IMR-90 (cell line): ENCODE measurements at regions of chr7 and their contacts with region 1.

Region 1: GRCh38 chr7:14717816-14718215 is 184.7 kb downstream of the DGKB start:
- DNase-seq: peak; percentile 13
- ATAC-seq: peak; percentile 68
- H3K4me3 ChIP-seq: no peak overlapping the region
- H3K27ac ChIP-seq: no peak overlapping the region
- H3K4me1 ChIP-seq: no peaks in the 10 kb centered on the region
- H3K27me3 ChIP-seq: no peaks in the 10 kb centered on the region
- CTCF ChIP-seq: peak; percentile 58
- POLR2A ChIP-seq: no peak
- RAD21 ChIP-seq: peak; percentile 58

Region 2: GRCh38 chr7:14698239-14698638 is 19.6 kb before region 1 on chr7:
- CTCF ChIA-PET with region 1: interaction called, 3 read pairs
- POLR2A ChIA-PET with region 1: no interaction called
- dilution Hi-C with region 1: no loop called
- in situ Hi-C with region 1: no loop called
- intact Hi-C with region 1: loop called (anchors 1 kb)
- DNase-seq: no peak
- ATAC-seq: no peak
- H3K4me3 ChIP-seq: no peak overlapping the region
- H3K27ac ChIP-seq: no peak overlapping the region
- H3K4me1 ChIP-seq: no peaks in the 10 kb centered on the region
- H3K27me3 ChIP-seq: no peaks in the 10 kb centered on the region
- CTCF ChIP-seq: no peak
- POLR2A ChIP-seq: no peak
- RAD21 ChIP-seq: no peak

Region 3: DNA sequence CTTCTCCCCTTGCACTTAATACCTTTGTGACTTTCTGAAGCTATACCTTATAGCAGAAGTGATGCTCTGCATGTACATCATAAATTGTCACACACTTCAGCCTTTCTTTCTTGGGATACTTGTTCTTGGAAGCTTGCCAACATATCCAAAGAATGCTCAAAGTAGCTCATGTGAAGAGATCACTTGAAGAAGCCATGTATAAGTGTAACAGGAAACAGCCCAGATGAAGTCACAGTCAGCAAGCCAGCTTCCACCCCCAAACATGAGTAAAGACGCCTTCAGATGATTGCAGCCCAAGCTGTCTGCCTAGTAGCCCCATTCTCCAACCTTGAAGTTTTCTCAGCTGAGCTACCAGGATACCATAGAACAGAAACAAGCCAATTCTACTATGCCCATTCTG is 133.8 kb after region 1 on chr7:
- CTCF ChIA-PET with region 1: no interaction called
- POLR2A ChIA-PET with region 1: no interaction called
- dilution Hi-C with region 1: no loop called
- in situ Hi-C with region 1: no loop called
- intact Hi-C with region 1: no loop called
- DNase-seq: peak; percentile 12
- ATAC-seq: no peak
- H3K4me3 ChIP-seq: no peak overlapping the region
- H3K27ac ChIP-seq: no peak overlapping the region
- H3K4me1 ChIP-seq: no peaks in the 10 kb centered on the region
- H3K27me3 ChIP-seq: no peaks in the 10 kb centered on the region
- CTCF ChIP-seq: no peak
- POLR2A ChIP-seq: no peak
- RAD21 ChIP-seq: no peak

Region 4: DNA sequence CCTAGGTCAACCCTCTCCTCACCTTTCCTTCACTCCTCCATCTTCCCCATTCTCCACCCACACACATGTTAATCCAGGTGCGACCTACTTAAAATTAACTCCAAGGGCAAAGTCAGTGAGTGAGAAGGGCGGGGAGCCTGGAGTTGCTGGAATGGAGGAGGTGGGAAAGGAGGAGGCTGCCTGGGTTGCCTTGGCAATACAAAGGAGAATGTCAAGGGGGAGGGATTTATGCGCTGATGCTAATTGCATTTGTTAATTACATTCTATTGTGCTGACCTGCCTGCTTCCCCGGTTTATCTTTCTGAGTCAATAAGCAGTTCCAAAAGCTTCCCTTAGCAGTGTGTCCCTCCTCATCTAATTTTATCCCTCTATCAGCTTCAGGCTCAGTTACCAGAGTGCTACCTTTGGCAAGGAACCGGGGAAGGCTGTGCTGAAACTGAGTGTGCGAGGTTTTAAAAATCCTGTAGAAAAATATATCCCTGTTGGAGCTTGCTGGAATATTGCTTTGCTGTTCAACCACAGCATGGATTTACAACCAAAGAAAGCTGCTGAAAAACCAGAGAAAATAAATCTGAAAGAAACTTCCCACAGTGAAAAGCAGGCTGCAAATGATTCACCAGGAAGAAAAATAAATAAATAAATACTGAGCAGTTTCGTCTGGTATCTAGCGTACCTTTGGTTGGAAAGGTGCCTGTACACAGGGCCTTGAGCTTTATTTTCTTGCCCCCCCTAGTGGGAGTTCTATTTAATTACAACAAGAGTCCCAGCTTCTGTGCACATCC is 297.9 kb after region 1 on chr7:
- CTCF ChIA-PET with region 1: interaction called, 6 read pairs
- POLR2A ChIA-PET with region 1: no interaction called
- dilution Hi-C with region 1: no loop called
- in situ Hi-C with region 1: loop called (anchors 5 kb)
- intact Hi-C with region 1: loop called (anchors 1 kb)
- DNase-seq: peak; percentile 49
- ATAC-seq: peak; percentile 85
- H3K4me3 ChIP-seq: no peak overlapping the region
- H3K27ac ChIP-seq: no peak overlapping the region
- H3K4me1 ChIP-seq: no peaks in the 10 kb centered on the region
- H3K27me3 ChIP-seq: no peaks in the 10 kb centered on the region
- CTCF ChIP-seq: peak; percentile 54
- POLR2A ChIP-seq: no peak
- RAD21 ChIP-seq: peak; percentile 40

Region 5: DNA sequence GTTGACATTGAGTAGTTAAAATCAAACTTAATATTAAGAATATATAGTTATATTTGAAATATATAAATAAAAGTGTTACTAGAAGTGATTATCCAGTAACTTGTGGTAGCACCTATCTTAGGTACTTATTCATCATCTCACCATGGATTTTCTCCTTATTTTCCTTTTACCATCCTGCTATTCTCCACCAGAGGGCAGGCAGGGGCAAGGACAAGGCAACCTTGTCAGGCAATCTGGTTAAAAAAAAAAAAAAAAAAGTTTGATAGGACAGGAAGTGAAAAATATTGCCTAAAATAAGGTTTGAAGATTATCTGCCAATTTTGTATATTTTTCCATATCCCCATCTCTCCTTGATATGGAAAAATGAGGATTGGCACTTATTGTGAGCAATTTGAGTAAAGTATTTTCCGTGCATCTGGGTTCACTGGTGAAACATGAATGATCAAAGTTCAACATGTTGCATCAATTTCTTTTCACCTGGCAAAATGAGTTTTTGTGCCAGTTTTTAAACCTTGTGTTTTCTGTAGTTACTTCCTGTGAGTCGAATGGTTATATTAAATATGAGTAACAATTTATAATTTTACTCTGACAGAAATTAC is 587.3 kb after region 1 on chr7:
- CTCF ChIA-PET with region 1: no interaction called
- POLR2A ChIA-PET with region 1: no interaction called
- dilution Hi-C with region 1: no loop called
- in situ Hi-C with region 1: no loop called
- intact Hi-C with region 1: loop called (anchors 5 kb)
- DNase-seq: peak; percentile 39
- ATAC-seq: no peak
- H3K4me3 ChIP-seq: no peak overlapping the region
- H3K27ac ChIP-seq: no peak overlapping the region
- H3K4me1 ChIP-seq: no peaks in the 10 kb centered on the region
- H3K27me3 ChIP-seq: no peaks in the 10 kb centered on the region
- CTCF ChIP-seq: peak; percentile 75
- POLR2A ChIP-seq: no peak
- RAD21 ChIP-seq: peak; percentile 74

Region 6: GRCh38 chr7:16071246-16071857 is 1353.5 kb after region 1 on chr7:
- CTCF ChIA-PET with region 1: no interaction called
- POLR2A ChIA-PET with region 1: no interaction called
- dilution Hi-C with region 1: no loop called
- in situ Hi-C with region 1: no loop called
- intact Hi-C with region 1: loop called (anchors 10 kb)
- DNase-seq: peak; percentile 67
- ATAC-seq: peak; percentile 56
- H3K4me3 ChIP-seq: no peak overlapping the region
- H3K27ac ChIP-seq: no peak overlapping the region
- H3K4me1 ChIP-seq: peaks cover 4% of the 10 kb centered on the region
- H3K27me3 ChIP-seq: no peaks in the 10 kb centered on the region
- CTCF ChIP-seq: peak; percentile 84
- POLR2A ChIP-seq: no peak
- RAD21 ChIP-seq: peak; percentile 88